Right cardiac atrium (tissue), 5 donors: ENCODE measurements at regions of chr11 and their contacts with region 1.

Region 1: GRCh38 chr11:47004595-47005033 is 68.1 kb downstream of the CSTPP1 start:
- DNase-seq: peak; percentile 78 to 92 (median 82)
- ATAC-seq: peak; percentile 98 to 99
- H3K4me3 ChIP-seq: no peak overlapping the region
- H3K27ac ChIP-seq: no peak overlapping the region
- H3K4me1 ChIP-seq: peaks cover 3% of the 10 kb centered on the region
- H3K27me3 ChIP-seq: no peaks in the 10 kb centered on the region

Region 2: DNA sequence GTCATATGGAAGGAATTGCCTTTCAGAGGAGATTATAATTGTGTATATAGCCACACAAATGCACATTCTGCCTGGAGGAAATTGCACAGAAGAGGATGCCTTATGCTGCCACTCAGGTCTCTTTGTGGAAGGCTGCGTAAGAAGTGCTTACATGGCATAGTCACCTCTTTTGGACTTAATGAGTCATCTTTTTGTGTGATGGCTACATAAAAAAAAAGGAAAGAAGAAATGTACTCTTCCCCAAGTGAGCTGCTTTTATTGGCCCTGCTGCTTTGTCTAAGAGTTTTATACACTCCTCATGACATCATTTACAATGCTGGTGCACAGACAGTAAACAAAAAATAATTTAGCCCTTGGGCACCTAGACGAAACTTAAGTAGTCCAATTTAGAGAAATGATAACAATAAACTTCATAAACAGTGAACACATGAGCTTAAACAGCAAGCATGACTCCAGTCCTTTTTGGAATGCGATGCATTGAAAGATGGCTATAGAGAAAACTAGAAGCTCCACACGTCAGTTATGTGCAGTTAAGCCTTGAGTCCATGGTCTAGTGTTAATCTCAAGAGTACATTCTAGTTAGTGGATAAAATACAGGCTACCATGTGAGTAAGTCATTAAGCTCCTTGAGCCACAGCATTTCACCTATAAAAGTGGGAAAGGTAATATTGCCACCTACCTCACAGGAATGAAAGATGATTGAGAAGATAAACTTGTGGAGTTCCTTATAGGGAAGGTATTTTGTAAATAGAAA is 56.1 kb before region 1 on chr11:
- intact Hi-C with region 1: loop called in 1 of 4 experiments (anchors 10 kb)
- DNase-seq: no peak
- ATAC-seq: no peak
- H3K4me3 ChIP-seq: no peak overlapping the region
- H3K27ac ChIP-seq: no peak overlapping the region
- H3K4me1 ChIP-seq: no peaks in the 10 kb centered on the region
- H3K27me3 ChIP-seq: no peaks in the 10 kb centered on the region